Stomach (tissue), 19 donors: ENCODE measurements at regions of chr1 and their contacts with region 1.

Region 1: GRCh38 chr1:179293340-179294327 is at the start of gene SOAT1:
- DNase-seq: peak; percentile 90 to 97
- H3K4me3 ChIP-seq: peak within 1 kb of the TSS; percentile 70 to 83 (median 80)
- H3K27ac ChIP-seq: peak within 1 kb of the TSS; percentile 92 to 97 (median 96)
- H3K4me1 ChIP-seq: peaks cover 30 to 66% (median 40%) of the 10 kb centered on the region in 4 donors
- H3K27me3 ChIP-seq: no peaks in the 10 kb centered on the region
- CTCF ChIP-seq: peak in 4 of 7 experiments; percentile 2 to 23 (median 9)
- EP300 ChIP-seq: no peak
- POLR2A ChIP-seq: peak in 2 of 4 donors; percentile 33 to 55
- total RNA-seq, gene SOAT1: 2.9 to 179 (median 10.7) TPM

Region 2: DNA sequence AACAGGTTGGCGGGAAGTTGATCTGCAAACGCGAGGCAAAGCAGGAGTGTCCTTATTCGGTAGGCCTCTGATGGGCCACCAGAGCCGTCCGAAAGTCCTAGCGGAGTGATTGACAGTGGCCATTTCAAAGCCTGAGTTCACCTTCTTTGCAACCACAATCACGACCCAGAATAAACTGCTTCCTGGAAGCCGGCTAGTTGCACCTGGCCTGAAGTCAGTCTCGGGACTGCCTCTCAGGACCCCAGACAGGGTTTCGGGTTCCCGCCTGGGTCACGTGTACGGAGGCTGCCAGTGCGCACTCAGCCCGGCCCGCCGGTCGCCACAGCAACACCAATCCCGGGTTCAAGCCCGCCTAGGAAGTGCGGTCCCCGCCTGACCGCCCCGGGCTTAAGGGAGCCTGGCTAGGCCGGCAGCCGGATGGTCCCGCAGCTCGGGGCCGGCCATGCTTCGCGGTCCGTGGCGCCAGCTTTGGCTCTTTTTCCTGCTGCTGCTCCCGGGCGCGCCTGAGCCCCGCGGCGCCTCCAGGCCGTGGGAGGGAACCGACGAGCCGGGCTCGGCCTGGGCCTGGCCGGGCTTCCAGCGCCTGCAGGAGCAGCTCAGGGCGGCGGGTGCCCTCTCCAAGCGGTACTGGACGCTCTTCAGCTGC is 211.8 kb before region 1 on chr1 and contains the start of gene TOR3A:
- intact Hi-C with region 1: loop called (anchors 5 kb)
- DNase-seq: peak; percentile 94 to 97
- H3K4me3 ChIP-seq: peak within 1 kb of the TSS; percentile 77 to 93 (median 84)
- H3K27ac ChIP-seq: peak within 1 kb of the TSS; percentile 79 to 94 (median 93)
- H3K4me1 ChIP-seq: peaks cover 17 to 37% (median 25%) of the 10 kb centered on the region in 4 donors
- H3K27me3 ChIP-seq: no peaks in the 10 kb centered on the region
- CTCF ChIP-seq: no peak
- EP300 ChIP-seq: no peak
- POLR2A ChIP-seq: peak in 2 of 4 donors; percentile 13 to 47
- total RNA-seq, gene TOR3A: 5.3 to 285 (median 32.1) TPM

Region 3: GRCh38 chr1:179151908-179152682 is 141.5 kb before region 1 on chr1:
- intact Hi-C with region 1: no loop called
- DNase-seq: peak in 1 of 2 donors; percentile 58
- H3K4me3 ChIP-seq: no peak overlapping the region
- H3K27ac ChIP-seq: peak overlapping the region in 3 of 5 donors; percentile 10 to 49 (median 48)
- H3K4me1 ChIP-seq: peaks cover 0 to 36% (median 19%) of the 10 kb centered on the region in 4 donors
- H3K27me3 ChIP-seq: no peaks in the 10 kb centered on the region
- CTCF ChIP-seq: no peak
- EP300 ChIP-seq: no peak
- POLR2A ChIP-seq: no peak

Region 4: DNA sequence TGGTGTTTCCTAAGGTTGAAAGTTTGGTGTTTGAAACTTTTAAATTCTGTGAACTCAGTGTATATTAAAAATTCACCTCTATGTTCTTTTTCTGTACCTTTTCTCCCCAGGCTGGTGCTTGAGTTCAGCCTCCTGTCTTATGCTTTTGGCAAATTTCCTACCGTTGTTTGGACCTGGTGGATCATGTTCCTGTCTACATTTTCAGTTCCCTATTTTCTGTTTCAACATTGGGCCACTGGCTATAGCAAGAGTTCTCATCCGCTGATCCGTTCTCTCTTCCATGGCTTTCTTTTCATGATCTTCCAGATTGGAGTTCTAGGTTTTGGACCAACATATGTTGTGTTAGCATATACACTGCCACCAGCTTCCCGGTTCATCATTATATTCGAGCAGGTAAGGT is 47.3 kb after region 1 on chr1:
- intact Hi-C with region 1: no loop called
- DNase-seq: no peak
- H3K4me3 ChIP-seq: no peak overlapping the region
- H3K27ac ChIP-seq: no peak overlapping the region
- H3K4me1 ChIP-seq: peaks cover 0 to 22% (median 5%) of the 10 kb centered on the region in 4 donors
- H3K27me3 ChIP-seq: no peaks in the 10 kb centered on the region
- CTCF ChIP-seq: no peak
- EP300 ChIP-seq: no peak
- POLR2A ChIP-seq: no peak